Thyroid gland (tissue), 4 donors: ENCODE measurements at regions of chr5 and their contacts with region 1.

Region 1: GRCh38 chr5:137629646-137630045 is 106.2 kb downstream of the KLHL3 start:
- DNase-seq: no peak
- H3K4me3 ChIP-seq: no peak overlapping the region
- H3K27ac ChIP-seq: peak overlapping the region; percentile 41 to 68 (median 46)
- H3K4me1 ChIP-seq: peaks cover 4 to 28% of the 10 kb centered on the region in 2 donors
- H3K27me3 ChIP-seq: no peaks in the 10 kb centered on the region
- CTCF ChIP-seq: peak; percentile 74 to 99 (median 92)
- POLR2A ChIP-seq: no peak

Region 2: DNA sequence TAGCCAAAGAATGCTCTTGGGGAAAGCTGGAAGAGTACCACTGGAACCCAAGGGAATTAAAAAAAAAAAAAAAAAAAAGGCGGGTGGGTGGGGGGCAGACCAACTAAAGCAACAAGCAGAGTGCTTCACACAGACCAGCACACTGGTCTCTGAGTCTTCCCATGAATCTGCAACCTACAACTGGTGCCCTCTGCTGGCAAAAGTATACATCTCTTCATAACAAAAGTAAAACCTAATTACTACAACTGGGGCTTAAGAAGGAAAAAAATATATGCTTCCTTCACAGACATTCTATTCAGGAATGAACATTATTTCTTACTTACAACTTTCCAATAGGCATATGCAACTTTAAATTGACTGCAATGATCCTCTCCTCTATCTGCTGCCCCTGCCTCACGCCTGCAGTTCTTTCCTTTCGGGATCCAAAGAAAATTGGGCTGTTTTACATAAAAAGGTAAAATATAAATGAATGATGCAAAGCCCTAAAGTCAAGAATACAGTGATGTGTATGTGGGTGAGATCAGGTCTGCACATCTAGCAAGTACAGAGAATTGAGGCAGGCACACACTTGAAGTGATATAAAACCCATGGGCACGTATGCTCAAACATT is 113.5 kb after region 1 on chr5:
- intact Hi-C with region 1: loop called (anchors 5 kb)
- DNase-seq: peak; percentile 55 to 69
- H3K4me3 ChIP-seq: no peak overlapping the region
- H3K27ac ChIP-seq: no peak overlapping the region
- H3K4me1 ChIP-seq: no peaks in the 10 kb centered on the region
- H3K27me3 ChIP-seq: no peaks in the 10 kb centered on the region
- CTCF ChIP-seq: peak in 5 of 6 experiments; percentile 59 to 85 (median 65)
- POLR2A ChIP-seq: no peak

Region 3: DNA sequence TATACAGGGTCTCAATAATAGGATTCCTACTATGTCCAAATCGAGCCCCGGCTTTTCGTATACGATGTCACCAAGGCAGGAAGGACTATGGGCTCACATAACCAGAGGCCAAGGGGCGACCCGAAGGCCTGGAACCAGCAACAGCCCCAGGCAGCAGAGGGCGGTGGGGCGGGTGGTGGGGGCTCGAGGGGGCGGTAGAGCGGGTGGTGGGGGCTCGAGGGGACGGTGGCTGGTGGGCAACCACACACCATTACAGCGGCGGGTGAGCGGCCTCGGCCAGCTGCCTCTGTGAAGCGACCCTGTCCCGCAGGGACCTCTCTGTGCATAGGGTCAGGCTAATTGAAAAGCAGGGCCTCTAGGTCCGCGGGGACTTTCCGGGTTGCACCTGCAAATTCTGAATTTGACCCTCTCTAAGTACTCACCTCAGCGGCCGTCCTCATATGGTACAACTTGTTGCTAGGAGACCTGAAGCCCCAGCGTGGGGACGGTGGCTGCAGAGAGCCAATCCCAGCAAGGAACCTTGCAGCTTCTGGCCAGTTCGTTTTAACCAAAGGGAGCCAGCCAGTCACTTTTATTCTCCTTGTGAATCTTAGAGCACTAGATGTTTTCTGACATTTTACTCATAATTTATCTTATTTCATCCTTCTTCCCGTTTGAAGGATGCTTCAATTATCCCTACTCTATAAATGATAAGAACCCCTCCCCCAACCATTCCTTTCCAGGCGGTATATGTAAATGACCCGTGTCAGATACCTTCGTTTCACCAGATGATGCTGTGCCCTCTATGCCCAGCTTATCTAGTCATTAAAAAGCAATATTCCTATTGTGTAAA is 509.5 kb after region 1 on chr5 and contains the start of gene NME5:
- intact Hi-C with region 1: loop called (anchors 10 kb)
- DNase-seq: peak; percentile 82 to 83
- H3K4me3 ChIP-seq: peak within 1 kb of the TSS in 2 of 3 donors; percentile 47 to 48
- H3K27ac ChIP-seq: no peak within 1 kb of the TSS
- H3K4me1 ChIP-seq: no peaks in the 10 kb centered on the region
- H3K27me3 ChIP-seq: no peaks in the 10 kb centered on the region
- CTCF ChIP-seq: no peak
- POLR2A ChIP-seq: no peak
- total RNA-seq, gene NME5: 4.3 to 14.4 (median 12.0) TPM